OCI-LY7 (cell line): ENCODE measurements at regions of chrX and their contacts with region 1.

Region 1: GRCh38 chrX:30910124-30910860 is 21.2 kb upstream of the TAB3 start:
- DNase-seq: peak; percentile 5
- H3K4me3 ChIP-seq: no peak overlapping the region
- H3K27ac ChIP-seq: no peak overlapping the region
- H3K4me1 ChIP-seq: no peaks in the 10 kb centered on the region
- CTCF ChIP-seq: no peak

Region 2: GRCh38 chrX:30414144-30414543 is 496.1 kb before region 1 on chrX:
- CTCF ChIA-PET with region 1: no interaction called
- POLR2A ChIA-PET with region 1: no interaction called
- intact Hi-C with region 1: no loop called
- DNase-seq: no peak
- H3K4me3 ChIP-seq: no peak overlapping the region
- H3K27ac ChIP-seq: no peak overlapping the region
- H3K4me1 ChIP-seq: no peaks in the 10 kb centered on the region
- CTCF ChIP-seq: no peak

Region 3: GRCh38 chrX:30795981-30796958 is 114.0 kb before region 1 on chrX:
- CTCF ChIA-PET with region 1: no interaction called
- POLR2A ChIA-PET with region 1: no interaction called
- intact Hi-C with region 1: no loop called
- DNase-seq: no peak
- H3K4me3 ChIP-seq: no peak overlapping the region
- H3K27ac ChIP-seq: no peak overlapping the region
- H3K4me1 ChIP-seq: no peaks in the 10 kb centered on the region
- CTCF ChIP-seq: no peak

Region 4: DNA sequence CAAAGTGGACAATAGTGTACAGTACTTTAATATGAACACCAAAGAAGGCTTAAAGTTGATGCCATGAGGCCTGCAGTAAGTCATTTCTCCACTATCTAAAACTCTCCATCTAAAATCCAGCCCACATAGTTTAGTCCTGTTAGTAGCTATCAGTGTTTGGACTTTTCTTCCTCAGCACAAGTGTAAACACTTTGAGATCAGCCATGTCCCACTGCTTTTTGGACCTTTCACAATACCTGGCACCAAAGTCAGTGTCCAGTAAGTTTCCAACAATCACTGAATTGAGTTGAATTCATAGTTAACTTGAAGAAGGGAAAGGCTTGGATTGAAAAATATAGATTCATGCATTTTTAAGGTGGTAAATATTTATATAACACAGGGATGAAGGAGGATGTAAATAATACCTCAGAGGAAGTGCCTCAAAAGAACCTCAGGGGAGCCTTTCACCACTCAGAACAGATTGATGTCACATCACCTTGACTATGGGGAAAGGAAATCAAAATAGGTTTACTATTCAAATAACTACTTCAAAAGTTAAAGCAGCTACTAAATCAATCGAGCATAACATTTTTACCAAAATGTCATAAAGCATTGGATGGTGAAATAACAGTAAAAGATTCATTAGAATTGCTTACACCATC is 84.9 kb after region 1 on chrX:
- CTCF ChIA-PET with region 1: no interaction called
- POLR2A ChIA-PET with region 1: interaction called, 11 read pairs
- intact Hi-C with region 1: no loop called
- DNase-seq: no peak
- H3K4me3 ChIP-seq: no peak overlapping the region
- H3K27ac ChIP-seq: no peak overlapping the region
- H3K4me1 ChIP-seq: no peaks in the 10 kb centered on the region
- CTCF ChIP-seq: no peak